Aorta (tissue), 5 donors: ENCODE measurements at regions of chr6 and their contacts with region 1.

Region 1: DNA sequence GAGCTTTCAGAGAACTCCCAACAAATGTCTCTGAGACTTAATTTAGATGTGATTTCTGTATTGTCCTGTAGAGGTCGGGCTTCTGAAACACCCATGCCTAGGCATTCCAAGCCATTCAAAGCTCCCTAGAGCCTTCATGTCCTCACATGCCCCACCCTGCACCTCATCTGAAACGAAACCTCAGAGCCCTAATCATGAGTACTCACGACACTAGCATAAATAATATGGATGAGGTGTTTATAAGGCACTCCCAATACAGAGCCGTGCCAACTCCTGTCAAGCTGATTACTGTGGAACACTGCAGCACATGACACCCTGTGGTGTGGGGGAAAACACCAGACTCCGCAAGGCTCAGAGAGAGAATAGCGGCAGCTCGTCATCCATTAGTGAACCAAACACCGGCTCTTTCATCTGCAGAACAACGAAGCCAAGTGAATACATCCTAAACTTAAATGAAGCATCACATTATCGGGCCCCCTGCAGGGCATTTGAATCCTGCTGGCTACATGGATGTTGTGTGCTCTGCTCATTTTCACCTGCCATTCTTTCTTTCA is 83.8 kb downstream of the FNDC1 start:
- DNase-seq: no peak
- ATAC-seq: no peak
- H3K4me3 ChIP-seq: no peak overlapping the region
- H3K27ac ChIP-seq: no peak overlapping the region
- H3K4me1 ChIP-seq: peaks cover 0 to 2% of the 10 kb centered on the region in 2 donors
- H3K27me3 ChIP-seq: no peaks in the 10 kb centered on the region

Region 2: DNA sequence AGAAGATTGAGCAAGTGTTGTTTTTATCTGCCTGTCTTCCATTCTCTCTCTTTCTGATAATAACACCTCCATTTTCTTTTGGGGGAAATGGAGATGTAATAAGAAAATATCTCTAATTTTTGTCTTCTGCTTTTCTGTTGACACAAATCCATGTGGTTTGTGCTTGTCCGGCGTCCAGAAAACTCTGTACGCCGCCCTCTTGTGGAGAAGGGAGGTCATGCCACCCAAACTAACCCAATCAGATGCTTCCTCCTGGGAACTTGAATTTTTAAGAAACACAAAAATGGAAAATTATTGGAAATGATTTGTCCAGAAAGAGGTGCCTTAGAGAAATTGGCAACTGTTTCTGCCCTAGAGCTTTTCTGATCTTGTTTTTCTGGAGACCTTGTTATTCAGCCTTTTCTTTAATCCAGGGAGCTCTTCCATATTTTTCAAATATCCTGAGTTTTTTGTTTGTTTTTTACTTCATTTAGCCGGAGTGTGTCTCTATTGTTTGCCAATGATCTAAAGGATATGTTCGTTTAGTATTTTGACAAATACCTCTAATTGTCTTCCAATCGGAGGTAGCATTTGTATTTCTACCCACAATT is 101.7 kb before region 1 on chr6:
- intact Hi-C with region 1: no loop called
- DNase-seq: peak in 1 of 2 donors; percentile 71
- ATAC-seq: peak; percentile 74
- H3K4me3 ChIP-seq: no peak overlapping the region
- H3K27ac ChIP-seq: no peak overlapping the region
- H3K4me1 ChIP-seq: no peaks in the 10 kb centered on the region
- H3K27me3 ChIP-seq: no peaks in the 10 kb centered on the region

Region 3: DNA sequence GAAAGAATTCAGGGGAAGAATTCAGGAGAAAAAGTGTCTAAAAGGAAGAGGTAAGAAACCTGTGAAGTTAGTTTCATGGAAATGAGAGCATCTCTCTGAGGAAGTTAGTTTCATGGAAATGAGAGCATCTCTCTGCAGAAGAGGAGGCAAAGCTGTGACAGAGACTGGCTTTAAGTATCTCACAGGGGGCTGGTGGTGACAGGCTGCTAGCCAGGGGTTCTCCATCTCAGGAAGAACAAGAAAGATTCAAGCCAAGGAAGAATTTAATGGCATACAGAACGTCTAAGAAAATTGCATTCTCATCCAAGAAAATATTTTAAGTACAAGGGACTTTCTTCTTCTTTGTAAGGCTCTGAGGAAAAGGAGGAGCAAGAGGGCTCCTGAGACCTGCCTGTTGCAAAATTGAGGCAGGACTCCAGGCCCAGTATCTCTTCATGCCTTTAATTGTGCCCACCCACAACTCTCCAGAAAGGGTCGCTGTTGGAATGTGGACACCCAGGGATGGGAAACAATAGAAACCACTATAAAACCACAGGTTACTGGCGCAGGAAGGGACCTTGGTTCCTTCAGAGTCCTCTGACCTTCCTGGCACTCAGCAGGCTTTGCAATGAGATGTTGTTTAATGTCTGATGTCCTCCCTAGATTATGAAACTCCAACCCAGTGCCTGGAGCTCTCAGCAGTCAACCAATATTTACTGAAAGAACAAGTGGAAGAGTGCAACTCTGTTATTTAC is 52.9 kb after region 1 on chr6:
- intact Hi-C with region 1: loop called in 1 of 2 experiments (anchors 5 kb)
- DNase-seq: no peak
- ATAC-seq: no peak
- H3K4me3 ChIP-seq: no peak overlapping the region
- H3K27ac ChIP-seq: no peak overlapping the region
- H3K4me1 ChIP-seq: peaks cover 4 to 8% of the 10 kb centered on the region in 2 donors
- H3K27me3 ChIP-seq: no peaks in the 10 kb centered on the region

Region 4: DNA sequence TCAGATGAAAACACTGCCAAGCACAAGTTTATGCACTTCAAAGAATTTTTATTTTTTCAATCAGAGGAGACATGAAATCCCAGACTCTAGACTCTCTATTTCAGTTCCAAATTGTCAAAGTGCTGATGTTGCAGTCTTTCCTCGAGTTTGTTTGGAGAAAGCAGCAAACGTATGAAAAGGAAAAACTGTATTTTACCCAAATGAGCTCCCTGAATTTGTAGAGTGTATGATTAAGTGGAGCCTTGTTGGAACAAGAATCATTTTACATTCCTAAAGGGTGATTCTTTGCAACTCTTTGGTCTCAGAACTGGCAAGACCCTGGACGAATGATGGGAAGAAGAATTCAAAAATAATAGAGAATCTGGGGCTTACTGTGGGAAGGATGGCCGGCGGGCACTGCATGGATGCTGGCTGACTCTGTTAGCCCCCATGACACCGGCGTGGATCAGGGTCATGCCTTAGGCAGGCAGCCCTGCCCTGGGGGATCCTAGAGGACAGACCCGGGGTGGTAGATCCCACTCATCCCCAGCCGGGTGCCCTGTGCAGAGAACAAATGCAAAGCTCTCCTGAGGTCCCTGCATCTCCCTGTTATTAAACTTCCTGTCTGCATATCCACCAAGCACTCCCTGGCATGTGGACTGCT is 123.6 kb after region 1 on chr6:
- intact Hi-C with region 1: loop called in 1 of 2 experiments (anchors 5 kb)
- DNase-seq: no peak
- ATAC-seq: peak; percentile 53
- H3K4me3 ChIP-seq: no peak overlapping the region
- H3K27ac ChIP-seq: peak overlapping the region; percentile 56 to 84
- H3K4me1 ChIP-seq: no peaks in the 10 kb centered on the region
- H3K27me3 ChIP-seq: no peaks in the 10 kb centered on the region

Region 5: DNA sequence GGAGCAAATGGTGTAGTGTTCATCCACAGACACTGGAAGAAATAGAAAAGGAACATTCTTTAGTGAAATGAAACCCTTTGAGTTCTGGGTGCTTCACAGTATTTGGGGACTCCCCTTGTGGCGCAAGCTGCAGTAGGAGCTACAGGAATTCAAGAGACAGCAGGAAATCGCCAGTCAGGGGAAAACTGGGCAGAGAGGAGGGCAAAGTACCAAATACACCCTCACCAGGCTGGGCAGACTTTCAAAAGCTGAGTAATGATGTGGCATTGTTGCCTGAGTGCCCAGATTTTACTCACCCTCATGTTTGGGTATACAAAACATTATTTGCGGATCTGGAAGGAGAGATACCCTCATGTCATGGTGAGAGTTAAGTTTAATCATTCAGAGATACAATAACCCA is 342.1 kb after region 1 on chr6:
- intact Hi-C with region 1: loop called in 1 of 2 experiments (anchors 10 kb)
- DNase-seq: peak in 1 of 2 donors; percentile 60
- ATAC-seq: peak; percentile 72
- H3K4me3 ChIP-seq: no peak overlapping the region
- H3K27ac ChIP-seq: peak overlapping the region in 1 of 2 donors; percentile 74
- H3K4me1 ChIP-seq: peaks cover 4 to 5% of the 10 kb centered on the region in 2 donors
- H3K27me3 ChIP-seq: no peaks in the 10 kb centered on the region